ENCODE measurements at regions of chr1 and their contacts with region 1.

Region 1: GRCh38 chr1:40951943-40952743 is 27.4 kb upstream of the CTPS1 start:
- DNase-seq: peak; percentile 65
- H3K4me3 Mint-ChIP-seq: no peak overlapping the region
- H3K27ac Mint-ChIP-seq: no peak overlapping the region
- H3K4me1 Mint-ChIP-seq: peaks cover 21% of the 10 kb centered on the region
- H3K27me3 Mint-ChIP-seq: peaks cover 16% of the 10 kb centered on the region

Region 2: GRCh38 chr1:40531381-40532061 is 420.6 kb before region 1 on chr1 and contains the start of gene ZNF684:
- CTCF ChIA-PET with region 1: interaction called, 12 read pairs
- POLR2A ChIA-PET with region 1: no interaction called
- DNase-seq: peak; percentile 85
- H3K4me3 Mint-ChIP-seq: peak within 1 kb of the TSS; percentile 96
- H3K27ac Mint-ChIP-seq: peak within 1 kb of the TSS; percentile 81
- H3K4me1 Mint-ChIP-seq: peaks cover 25% of the 10 kb centered on the region
- H3K27me3 Mint-ChIP-seq: peaks cover 2% of the 10 kb centered on the region
- total RNA-seq, gene ZNF684: 6.6 to 6.8 TPM

Region 3: GRCh38 chr1:40862008-40862863 is 89.9 kb before region 1 on chr1 and contains the start of gene CITED4:
- CTCF ChIA-PET with region 1: interaction called, 255 read pairs
- POLR2A ChIA-PET with region 1: interaction called, 12 read pairs
- DNase-seq: peak; percentile 96
- H3K4me3 Mint-ChIP-seq: peak within 1 kb of the TSS; percentile 82
- H3K27ac Mint-ChIP-seq: peak within 1 kb of the TSS; percentile 95
- H3K4me1 Mint-ChIP-seq: peaks cover 33% of the 10 kb centered on the region
- H3K27me3 Mint-ChIP-seq: peaks cover 31% of the 10 kb centered on the region
- total RNA-seq, gene CITED4: 6.9 to 7.9 TPM

Region 4: GRCh38 chr1:40877698-40878097 is 74.4 kb before region 1 on chr1:
- CTCF ChIA-PET with region 1: interaction called, 39 read pairs
- POLR2A ChIA-PET with region 1: no interaction called
- DNase-seq: peak; percentile 26
- H3K4me3 Mint-ChIP-seq: no peak overlapping the region
- H3K27ac Mint-ChIP-seq: no peak overlapping the region
- H3K4me1 Mint-ChIP-seq: peaks cover 52% of the 10 kb centered on the region
- H3K27me3 Mint-ChIP-seq: peaks cover 4% of the 10 kb centered on the region

Region 5: DNA sequence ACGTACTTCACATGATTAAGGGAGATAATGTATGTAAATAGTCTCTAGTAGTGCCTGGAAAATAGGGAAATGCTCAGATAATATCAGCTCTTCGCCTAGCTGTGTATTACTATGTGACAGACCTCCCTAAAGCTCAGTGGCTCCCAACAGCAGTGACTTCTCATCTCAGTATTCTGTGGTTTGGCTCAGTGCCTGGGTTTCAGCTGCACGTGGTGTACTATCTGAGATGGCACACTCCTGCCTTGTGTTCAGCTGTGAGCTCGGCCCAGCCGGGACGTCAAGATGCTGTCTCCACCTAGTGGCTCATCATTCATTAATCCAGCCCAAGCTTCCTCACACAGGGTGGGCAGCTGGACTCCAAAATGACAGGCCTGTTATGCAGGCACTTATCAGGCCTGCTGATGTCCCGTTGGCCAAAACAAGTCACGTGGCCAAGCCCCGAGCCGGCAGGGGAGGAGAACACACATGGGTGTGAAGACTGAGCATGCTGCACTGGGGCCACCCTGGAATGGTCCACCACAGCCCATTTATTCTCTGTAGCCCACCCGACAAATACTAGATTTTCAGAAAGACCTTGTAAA is 51.6 kb after region 1 on chr1:
- CTCF ChIA-PET with region 1: interaction called, 11 read pairs
- POLR2A ChIA-PET with region 1: no interaction called
- DNase-seq: peak; percentile 88
- H3K4me3 Mint-ChIP-seq: no peak overlapping the region
- H3K27ac Mint-ChIP-seq: peak overlapping the region; percentile 55
- H3K4me1 Mint-ChIP-seq: peaks cover 27% of the 10 kb centered on the region
- H3K27me3 Mint-ChIP-seq: no peaks in the 10 kb centered on the region